Common myeloid progenitor, CD34-positive (primary cell): ENCODE measurements at regions of chr5 and their contacts with region 1.

Region 1: DNA sequence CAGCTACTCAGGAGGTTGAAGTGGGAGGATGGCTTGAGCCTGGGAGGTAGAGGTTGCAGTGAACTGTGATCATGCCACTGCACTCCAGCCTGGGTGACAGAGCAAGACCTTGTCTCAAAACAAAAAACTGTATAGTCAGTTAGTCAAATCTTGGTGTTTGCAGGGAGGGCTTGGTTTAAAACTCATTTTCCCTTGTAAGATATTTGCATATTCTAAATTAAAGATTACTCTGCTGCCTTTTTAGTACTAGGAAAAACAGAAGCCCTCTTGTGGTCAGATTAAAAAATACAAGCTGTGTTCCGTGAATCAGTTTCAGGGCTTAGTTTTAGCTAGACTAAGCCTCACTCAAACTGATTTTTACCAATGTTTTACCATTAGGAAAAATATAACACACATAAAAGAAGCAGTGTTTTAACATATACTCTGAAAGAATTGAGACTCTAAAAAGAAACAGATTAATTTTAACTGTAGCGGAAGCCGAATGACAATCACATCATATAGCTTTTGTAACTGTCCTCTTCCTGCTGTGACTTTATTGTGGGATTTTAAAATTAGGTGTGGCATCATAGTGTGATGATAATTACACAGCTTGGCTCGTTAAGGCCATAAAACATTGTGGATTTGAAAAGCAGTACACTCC is 84.9 kb upstream of the BASP1 start:
- DNase-seq: peak; percentile 31 to 58 (median 45)
- H3K4me3 ChIP-seq: no peak overlapping the region
- H3K27ac ChIP-seq: no peak overlapping the region
- H3K4me1 ChIP-seq: peaks cover 4 to 19% (median 13%) of the 10 kb centered on the region in 4 experiments
- H3K27me3 ChIP-seq: peaks cover 0 to 25% (median 10%) of the 10 kb centered on the region in 5 experiments

Region 2: GRCh38 chr5:16934123-16934522 is 198.4 kb before region 1 on chr5:
- CTCF ChIA-PET with region 1: interaction called, 34 read pairs
- POLR2A ChIA-PET with region 1: no interaction called
- DNase-seq: peak; percentile 70 to 84 (median 79)
- H3K4me3 ChIP-seq: no peak overlapping the region
- H3K27ac ChIP-seq: no peak overlapping the region
- H3K4me1 ChIP-seq: peaks cover 4 to 21% (median 19%) of the 10 kb centered on the region in 4 experiments
- H3K27me3 ChIP-seq: peaks cover 4 to 79% (median 56%) of the 10 kb centered on the region in 5 experiments

Region 3: DNA sequence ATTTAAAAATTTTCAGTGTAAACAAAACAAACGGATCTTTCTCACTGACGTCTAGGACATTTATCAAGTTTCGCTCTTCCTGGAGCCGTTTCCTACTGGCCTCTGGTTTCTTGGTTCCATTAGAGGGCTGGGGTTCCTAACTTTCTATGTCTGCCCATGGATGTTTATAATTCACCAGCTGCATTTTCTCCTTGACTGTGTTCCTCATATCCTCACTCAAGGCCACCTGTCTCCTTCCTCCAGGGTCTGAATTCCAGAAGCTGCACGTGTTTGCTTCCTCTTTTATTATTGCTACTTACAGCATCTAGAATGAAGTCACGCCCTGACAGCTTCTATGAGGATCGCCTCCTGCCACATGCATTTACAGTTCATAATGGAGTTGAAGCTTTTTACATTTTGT is 10.8 kb after region 1 on chr5:
- CTCF ChIA-PET with region 1: interaction called, 23 read pairs
- POLR2A ChIA-PET with region 1: no interaction called
- DNase-seq: no peak
- H3K4me3 ChIP-seq: no peak overlapping the region
- H3K27ac ChIP-seq: no peak overlapping the region
- H3K4me1 ChIP-seq: peaks cover 0 to 2% (median 0%) of the 10 kb centered on the region in 4 experiments
- H3K27me3 ChIP-seq: no peaks in the 10 kb centered on the region

Region 4: GRCh38 chr5:17154211-17154996 is 21.8 kb after region 1 on chr5:
- CTCF ChIA-PET with region 1: interaction called, 15 read pairs
- POLR2A ChIA-PET with region 1: no interaction called
- DNase-seq: peak in 2 of 3 donors; percentile 12 to 27
- H3K4me3 ChIP-seq: no peak overlapping the region
- H3K27ac ChIP-seq: no peak overlapping the region
- H3K4me1 ChIP-seq: peaks cover 0 to 4% (median 0%) of the 10 kb centered on the region in 4 experiments
- H3K27me3 ChIP-seq: peaks cover 0 to 3% (median 0%) of the 10 kb centered on the region in 5 experiments